ENCODE measurements at regions of chr10 and their contacts with region 1.

Region 1: GRCh38 chr10:66869635-66870034 is 56.2 kb upstream of the LRRTM3 start:
- DNase-seq: no peak
- ATAC-seq: no peak
- H3K4me3 ChIP-seq: no peak overlapping the region
- H3K4me3 Mint-ChIP-seq: no peak overlapping the region
- H3K27ac ChIP-seq: no peak overlapping the region
- H3K27ac Mint-ChIP-seq: no peak overlapping the region
- H3K4me1 ChIP-seq: no peaks in the 10 kb centered on the region
- H3K4me1 Mint-ChIP-seq: no peaks in the 10 kb centered on the region
- H3K27me3 ChIP-seq: no peaks in the 10 kb centered on the region
- H3K27me3 Mint-ChIP-seq: no peaks in the 10 kb centered on the region
- CTCF ChIP-seq: no peak

Region 2: DNA sequence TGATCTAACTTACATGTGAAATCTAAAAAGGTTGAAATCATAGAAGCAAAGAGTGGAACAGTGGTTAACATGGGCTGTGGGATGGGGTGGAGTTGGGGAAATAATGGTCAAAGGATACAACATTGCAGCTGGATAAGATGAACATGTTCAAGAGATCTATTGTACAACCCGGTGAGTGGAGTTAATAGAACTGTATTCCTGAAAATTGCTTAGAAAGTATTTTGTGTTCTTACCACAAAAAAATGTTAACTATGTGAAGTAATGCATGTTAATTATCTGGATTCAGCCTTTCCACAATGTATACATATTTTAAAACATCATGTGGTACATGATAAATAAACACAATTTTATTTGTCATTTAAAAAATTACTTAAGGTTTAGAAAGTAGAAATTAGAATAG is 214.8 kb before region 1 on chr10:
- CTCF ChIA-PET with region 1: no interaction called
- POLR2A ChIA-PET with region 1: no interaction called
- intact Hi-C with region 1: no loop called
- DNase-seq: no peak
- ATAC-seq: no peak
- H3K4me3 ChIP-seq: no peak overlapping the region
- H3K4me3 Mint-ChIP-seq: no peak overlapping the region
- H3K27ac ChIP-seq: no peak overlapping the region
- H3K27ac Mint-ChIP-seq: no peak overlapping the region
- H3K4me1 ChIP-seq: no peaks in the 10 kb centered on the region
- H3K4me1 Mint-ChIP-seq: no peaks in the 10 kb centered on the region
- H3K27me3 ChIP-seq: no peaks in the 10 kb centered on the region
- H3K27me3 Mint-ChIP-seq: no peaks in the 10 kb centered on the region
- CTCF ChIP-seq: no peak

Region 3: GRCh38 chr10:66881814-66882213 is 12.2 kb after region 1 on chr10:
- CTCF ChIA-PET with region 1: no interaction called
- POLR2A ChIA-PET with region 1: no interaction called
- intact Hi-C with region 1: loop called in 1 of 2 experiments (anchors 1 kb)
- DNase-seq: no peak
- ATAC-seq: no peak
- H3K4me3 ChIP-seq: no peak overlapping the region
- H3K4me3 Mint-ChIP-seq: no peak overlapping the region
- H3K27ac ChIP-seq: no peak overlapping the region
- H3K27ac Mint-ChIP-seq: no peak overlapping the region
- H3K4me1 ChIP-seq: no peaks in the 10 kb centered on the region
- H3K4me1 Mint-ChIP-seq: no peaks in the 10 kb centered on the region
- H3K27me3 ChIP-seq: no peaks in the 10 kb centered on the region
- H3K27me3 Mint-ChIP-seq: no peaks in the 10 kb centered on the region
- CTCF ChIP-seq: no peak